Sigmoid colon (tissue), 7 donors: ENCODE measurements at regions of chr1 and their contacts with region 1.

Region 1: GRCh38 chr1:111619635-111620440 is at the start of gene RAP1A:
- DNase-seq: peak; percentile 98
- H3K4me3 ChIP-seq: peak within 1 kb of the TSS; percentile 66 to 97 (median 81)
- H3K27ac ChIP-seq: peak within 1 kb of the TSS; percentile 95 to 99 (median 97)
- H3K4me1 ChIP-seq: peaks cover 0 to 65% (median 51%) of the 10 kb centered on the region in 4 donors
- H3K27me3 ChIP-seq: no peaks in the 10 kb centered on the region
- CTCF ChIP-seq: no peak
- EP300 ChIP-seq: no peak
- POLR2A ChIP-seq: peak; percentile 60 to 63
- total RNA-seq, gene RAP1A: 213 to 381 (median 301) TPM

Region 2: GRCh38 chr1:111507411-111508201 is 112.2 kb before region 1 on chr1:
- intact Hi-C with region 1: loop called (anchors 1 kb)
- DNase-seq: peak; percentile 89
- H3K4me3 ChIP-seq: peak overlapping the region in 3 of 4 donors; percentile 26 to 31 (median 30)
- H3K27ac ChIP-seq: peak overlapping the region; percentile 91 to 95 (median 94)
- H3K4me1 ChIP-seq: peaks cover 0 to 74% (median 60%) of the 10 kb centered on the region in 4 donors
- H3K27me3 ChIP-seq: no peaks in the 10 kb centered on the region
- CTCF ChIP-seq: no peak
- EP300 ChIP-seq: no peak
- POLR2A ChIP-seq: no peak

Region 3: DNA sequence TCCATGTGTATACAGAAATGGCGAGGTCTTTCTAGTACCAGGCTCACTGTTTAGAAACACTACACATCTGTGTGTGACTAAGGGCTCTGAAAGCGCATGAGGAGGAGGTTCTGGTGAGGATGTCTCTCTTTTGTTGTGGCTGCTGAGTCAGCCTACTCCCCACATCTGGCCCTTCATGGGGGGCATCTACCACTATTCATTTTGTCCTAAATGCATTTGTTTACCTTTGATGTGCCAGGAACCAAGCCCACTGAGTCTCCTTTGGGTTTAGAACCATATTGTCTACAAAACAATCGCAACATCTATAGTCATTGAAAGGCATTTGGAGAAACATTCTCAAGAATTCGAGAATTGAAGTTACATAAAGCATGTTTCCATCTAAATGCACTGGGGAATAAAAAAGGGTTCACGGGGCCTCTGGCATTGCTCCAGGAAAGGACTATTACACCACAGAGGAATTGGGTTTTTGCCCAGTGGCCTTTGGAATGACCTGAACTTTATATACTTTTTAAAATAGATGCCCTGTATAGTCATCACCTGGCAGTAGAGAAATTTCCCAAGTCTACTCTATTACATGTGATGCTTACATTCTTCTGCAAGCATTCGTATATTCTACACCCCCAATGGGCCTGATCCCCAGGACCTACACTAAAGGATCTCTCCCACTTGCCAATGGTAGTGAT is 81.4 kb before region 1 on chr1:
- intact Hi-C with region 1: loop called (anchors 5 kb)
- DNase-seq: no peak
- H3K4me3 ChIP-seq: no peak overlapping the region
- H3K27ac ChIP-seq: peak overlapping the region; percentile 76 to 89 (median 83)
- H3K4me1 ChIP-seq: peaks cover 3 to 59% (median 46%) of the 10 kb centered on the region in 4 donors
- H3K27me3 ChIP-seq: no peaks in the 10 kb centered on the region
- CTCF ChIP-seq: no peak
- EP300 ChIP-seq: no peak
- POLR2A ChIP-seq: no peak

Region 4: GRCh38 chr1:111660204-111661150 is 40.6 kb after region 1 on chr1:
- intact Hi-C with region 1: no loop called
- DNase-seq: no peak
- H3K4me3 ChIP-seq: no peak overlapping the region
- H3K27ac ChIP-seq: peak overlapping the region; percentile 39 to 60 (median 54)
- H3K4me1 ChIP-seq: peaks cover 0 to 87% (median 68%) of the 10 kb centered on the region in 4 donors
- H3K27me3 ChIP-seq: no peaks in the 10 kb centered on the region
- CTCF ChIP-seq: no peak
- EP300 ChIP-seq: no peak
- POLR2A ChIP-seq: no peak

Region 5: GRCh38 chr1:111755331-111756123 is 135.7 kb after region 1 on chr1 and contains the start of gene DDX20:
- intact Hi-C with region 1: no loop called
- DNase-seq: peak; percentile 97
- H3K4me3 ChIP-seq: peak within 1 kb of the TSS; percentile 75 to 88 (median 78)
- H3K27ac ChIP-seq: peak within 1 kb of the TSS; percentile 83 to 94 (median 93)
- H3K4me1 ChIP-seq: peaks cover 0 to 36% (median 30%) of the 10 kb centered on the region in 4 donors
- H3K27me3 ChIP-seq: no peaks in the 10 kb centered on the region
- CTCF ChIP-seq: peak; percentile 78 to 90 (median 88)
- EP300 ChIP-seq: peak in 2 of 4 donors; percentile 60 to 71
- POLR2A ChIP-seq: peak; percentile 16 to 46
- total RNA-seq, gene DDX20: 18.7 to 30.9 (median 22.9) TPM